Activated T-helper 2 cell treated with anti-CD3 and anti-CD28 coated beads, Interferon-gamma antibody, Interleukin-2, Interleukin-4, amounts not matched to agents 10 μg/mL and 5 μg/mL and 100 μg/mL, durations not matched to agents 14 hours and 24 hours and 36 hours (primary cell): ENCODE measurements at regions of chr10 and their contacts with region 1.

Region 1: GRCh38 chr10:119496273-119496672 is 46.2 kb downstream of the RGS10 start:
- DNase-seq: peak; percentile 22
- H3K4me3 Mint-ChIP-seq: no peak overlapping the region
- H3K27ac Mint-ChIP-seq: peak overlapping the region; percentile 60
- H3K4me1 Mint-ChIP-seq: peaks cover 68% of the 10 kb centered on the region
- H3K27me3 Mint-ChIP-seq: no peaks in the 10 kb centered on the region

Region 2: DNA sequence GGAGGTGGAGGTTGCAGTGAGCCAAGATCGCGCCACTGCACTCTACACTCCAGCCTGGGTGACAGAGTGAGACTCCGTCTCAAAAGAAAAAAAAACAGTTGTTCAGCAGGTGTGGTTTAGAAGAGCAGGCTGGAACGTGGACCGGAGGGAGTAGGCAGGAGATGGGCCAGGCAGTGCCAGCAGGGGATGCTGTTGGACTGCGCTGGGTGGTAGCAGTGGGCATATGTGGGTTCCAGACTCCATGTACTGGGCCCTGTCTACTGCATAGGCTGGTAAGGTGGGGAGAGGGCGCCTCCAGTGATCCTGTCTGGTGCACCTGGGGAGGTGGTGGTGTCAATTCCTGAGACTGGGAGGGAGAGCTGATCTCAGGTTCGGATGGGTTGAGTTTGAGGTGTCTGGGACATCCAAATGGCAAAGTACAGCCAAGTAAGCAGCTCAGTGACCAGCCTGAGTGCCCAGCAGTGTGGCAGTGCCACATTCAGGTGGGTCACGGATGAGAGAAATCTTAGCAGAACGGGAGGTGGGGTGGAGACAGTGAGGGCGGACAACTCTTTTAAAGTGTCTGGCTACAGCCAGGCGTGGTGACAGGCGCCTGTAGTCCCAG is 356.7 kb before region 1 on chr10:
- intact Hi-C with region 1: loop called (anchors 10 kb)
- DNase-seq: peak; percentile 41
- H3K4me3 Mint-ChIP-seq: no peak overlapping the region
- H3K27ac Mint-ChIP-seq: peak overlapping the region; percentile 1
- H3K4me1 Mint-ChIP-seq: peaks cover 18% of the 10 kb centered on the region
- H3K27me3 Mint-ChIP-seq: no peaks in the 10 kb centered on the region

Region 3: DNA sequence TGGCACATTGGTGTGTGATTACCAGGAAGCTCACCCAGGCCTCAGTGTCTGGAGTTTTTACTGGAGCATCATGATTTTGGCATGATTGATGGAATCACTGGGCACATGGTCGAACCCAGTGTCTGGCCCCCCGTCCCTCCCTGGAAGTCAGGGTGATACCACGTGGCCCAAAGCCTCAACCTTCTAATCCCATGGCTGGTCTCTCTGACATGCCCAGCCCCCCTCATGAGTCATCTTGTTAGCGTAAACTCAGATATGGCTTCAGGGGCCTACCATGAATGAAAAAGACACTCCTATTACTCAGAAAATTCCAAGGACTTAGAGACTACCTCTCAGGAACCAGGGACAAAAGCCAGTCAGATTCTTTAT is 179.6 kb before region 1 on chr10:
- intact Hi-C with region 1: no loop called
- DNase-seq: no peak
- H3K4me3 Mint-ChIP-seq: no peak overlapping the region
- H3K27ac Mint-ChIP-seq: peak overlapping the region; percentile 51
- H3K4me1 Mint-ChIP-seq: peaks cover 47% of the 10 kb centered on the region
- H3K27me3 Mint-ChIP-seq: peaks cover 4% of the 10 kb centered on the region

Region 4: GRCh38 chr10:119466655-119467054 is 29.6 kb before region 1 on chr10:
- intact Hi-C with region 1: no loop called
- DNase-seq: peak; percentile 26
- H3K4me3 Mint-ChIP-seq: no peak overlapping the region
- H3K27ac Mint-ChIP-seq: no peak overlapping the region
- H3K4me1 Mint-ChIP-seq: no peaks in the 10 kb centered on the region
- H3K27me3 Mint-ChIP-seq: peaks cover 4% of the 10 kb centered on the region

Region 5: DNA sequence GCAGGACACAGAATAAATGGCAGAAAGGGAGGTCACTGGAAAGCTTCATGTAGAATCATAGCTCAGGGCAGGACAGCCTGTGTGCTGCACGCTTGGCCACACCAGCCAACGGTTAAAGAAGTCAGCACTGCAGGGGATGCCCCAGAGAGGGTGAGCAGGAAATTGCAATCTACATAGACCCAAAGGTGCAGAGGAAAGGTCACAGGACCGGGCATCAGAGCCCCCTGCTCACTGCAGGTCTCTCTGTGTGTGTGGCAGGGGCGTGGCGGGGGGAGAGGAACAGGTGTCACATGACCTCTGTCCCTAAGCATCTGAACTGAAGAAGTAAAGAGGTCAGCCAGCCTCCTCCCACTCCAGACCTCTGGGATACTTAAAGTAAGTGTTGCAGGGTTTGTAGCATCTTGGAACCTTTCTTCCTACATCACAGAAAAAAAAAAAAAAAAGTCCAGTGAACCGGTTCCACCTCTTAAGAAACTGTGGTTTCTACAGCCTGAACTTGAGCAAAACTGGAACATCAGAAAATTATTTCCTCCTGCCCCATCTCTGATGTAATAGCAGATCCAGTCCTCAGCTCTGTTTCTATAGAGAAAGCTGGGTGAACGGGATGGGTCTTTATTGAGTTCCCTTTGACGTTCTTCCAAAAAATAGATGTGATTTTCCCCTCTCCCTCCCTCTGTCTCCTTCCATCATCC is 18.0 kb before region 1 on chr10:
- intact Hi-C with region 1: loop called (anchors 2 kb)
- DNase-seq: no peak
- H3K4me3 Mint-ChIP-seq: no peak overlapping the region
- H3K27ac Mint-ChIP-seq: peak overlapping the region; percentile 46
- H3K4me1 Mint-ChIP-seq: peaks cover 26% of the 10 kb centered on the region
- H3K27me3 Mint-ChIP-seq: no peaks in the 10 kb centered on the region

Region 6: GRCh38 chr10:119517235-119518141 is 21.2 kb after region 1 on chr10:
- intact Hi-C with region 1: loop called (anchors 1 kb)
- DNase-seq: peak; percentile 51
- H3K4me3 Mint-ChIP-seq: peak overlapping the region; percentile 47
- H3K27ac Mint-ChIP-seq: peak overlapping the region; percentile 77
- H3K4me1 Mint-ChIP-seq: peaks cover 36% of the 10 kb centered on the region
- H3K27me3 Mint-ChIP-seq: no peaks in the 10 kb centered on the region

Region 7: DNA sequence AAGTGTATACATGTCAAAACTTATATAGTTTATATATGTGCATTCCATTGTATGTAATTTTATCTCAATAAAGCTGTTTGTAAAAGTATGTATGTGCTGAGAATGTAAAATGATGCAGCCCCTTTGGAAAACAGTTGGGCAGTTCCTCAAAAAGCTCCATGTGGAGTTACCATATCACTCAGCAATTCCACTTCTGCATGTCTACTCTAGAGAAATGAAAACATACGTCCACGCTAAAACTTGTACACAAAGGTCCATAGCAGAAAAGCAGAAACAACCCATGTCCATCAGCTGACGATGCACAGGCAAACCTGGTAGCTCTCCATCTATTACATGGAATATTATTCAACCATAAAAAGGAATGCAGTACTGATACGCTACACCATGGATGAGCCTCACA is 54.6 kb after region 1 on chr10:
- intact Hi-C with region 1: no loop called
- DNase-seq: no peak
- H3K4me3 Mint-ChIP-seq: no peak overlapping the region
- H3K27ac Mint-ChIP-seq: no peak overlapping the region
- H3K4me1 Mint-ChIP-seq: no peaks in the 10 kb centered on the region
- H3K27me3 Mint-ChIP-seq: peaks cover 39% of the 10 kb centered on the region

Region 8: DNA sequence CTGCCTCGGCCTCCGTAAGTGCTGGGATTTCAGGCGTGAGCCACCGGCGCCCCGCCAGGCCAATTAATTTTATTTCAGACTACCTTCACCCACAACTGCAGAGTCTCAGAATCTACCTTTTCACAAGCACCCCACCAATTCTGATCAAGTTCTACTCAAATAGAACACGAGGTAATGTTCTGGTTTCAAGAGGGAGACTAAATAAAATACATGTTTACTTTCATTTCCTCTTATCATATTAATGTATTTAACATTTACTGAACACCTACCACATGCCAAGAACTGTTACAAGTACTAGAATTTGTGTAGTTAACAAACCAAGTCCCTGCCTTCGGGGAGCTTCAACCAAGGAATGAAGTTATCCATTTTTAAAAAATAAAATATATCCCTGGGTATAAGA is 71.7 kb after region 1 on chr10:
- intact Hi-C with region 1: no loop called
- DNase-seq: no peak
- H3K4me3 Mint-ChIP-seq: no peak overlapping the region
- H3K27ac Mint-ChIP-seq: no peak overlapping the region
- H3K4me1 Mint-ChIP-seq: no peaks in the 10 kb centered on the region
- H3K27me3 Mint-ChIP-seq: no peaks in the 10 kb centered on the region

Region 9: DNA sequence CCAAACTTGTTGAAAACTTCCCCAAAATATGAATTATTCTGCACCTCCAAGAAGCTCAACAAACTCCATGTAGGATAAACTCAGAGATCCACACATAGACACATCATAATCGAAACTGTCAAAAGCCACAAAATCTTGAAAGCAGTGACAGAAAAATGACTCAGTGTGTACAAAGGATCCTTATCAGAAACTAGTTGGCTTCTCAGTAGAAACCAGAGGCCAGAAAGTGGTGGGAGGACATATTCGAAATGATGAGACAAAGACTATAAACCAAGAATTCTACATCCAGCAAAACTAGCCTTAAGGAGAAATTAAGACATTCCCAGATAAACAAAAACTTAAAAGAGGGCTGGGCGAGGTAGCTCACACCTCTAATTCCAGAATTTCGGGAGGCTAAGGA is 337.9 kb after region 1 on chr10:
- intact Hi-C with region 1: loop called (anchors 5 kb)
- DNase-seq: no peak
- H3K4me3 Mint-ChIP-seq: no peak overlapping the region
- H3K27ac Mint-ChIP-seq: peak overlapping the region; percentile 47
- H3K4me1 Mint-ChIP-seq: peaks cover 19% of the 10 kb centered on the region
- H3K27me3 Mint-ChIP-seq: no peaks in the 10 kb centered on the region